ENCODE measurements at regions of chr7 and their contacts with region 1.

Region 1: DNA sequence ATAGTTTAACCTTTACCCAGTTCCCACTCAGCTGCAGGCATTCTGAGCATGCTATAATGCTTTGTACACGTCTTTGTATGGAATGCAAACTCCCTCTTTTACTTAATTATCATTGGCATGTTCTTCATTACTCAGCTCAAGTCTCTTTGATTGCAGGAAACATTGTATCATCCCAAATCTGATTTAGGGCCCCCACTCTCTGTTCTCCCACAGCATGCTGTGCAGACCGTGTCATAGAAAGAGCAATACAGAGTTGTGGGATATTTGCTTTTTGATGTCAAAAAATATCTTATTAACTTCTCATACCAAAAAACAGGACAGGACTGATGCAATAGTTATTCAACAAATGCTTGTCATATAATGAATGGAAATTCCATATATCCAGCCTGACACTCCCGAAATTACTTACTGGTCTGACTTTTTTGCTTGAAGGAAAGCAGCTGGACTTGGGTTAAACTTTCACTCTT is 1081.5 kb upstream of the C7orf33 start:
- DNase-seq: no peak
- H3K4me3 ChIP-seq: no peak overlapping the region
- CTCF ChIP-seq: no peak

Region 2: DNA sequence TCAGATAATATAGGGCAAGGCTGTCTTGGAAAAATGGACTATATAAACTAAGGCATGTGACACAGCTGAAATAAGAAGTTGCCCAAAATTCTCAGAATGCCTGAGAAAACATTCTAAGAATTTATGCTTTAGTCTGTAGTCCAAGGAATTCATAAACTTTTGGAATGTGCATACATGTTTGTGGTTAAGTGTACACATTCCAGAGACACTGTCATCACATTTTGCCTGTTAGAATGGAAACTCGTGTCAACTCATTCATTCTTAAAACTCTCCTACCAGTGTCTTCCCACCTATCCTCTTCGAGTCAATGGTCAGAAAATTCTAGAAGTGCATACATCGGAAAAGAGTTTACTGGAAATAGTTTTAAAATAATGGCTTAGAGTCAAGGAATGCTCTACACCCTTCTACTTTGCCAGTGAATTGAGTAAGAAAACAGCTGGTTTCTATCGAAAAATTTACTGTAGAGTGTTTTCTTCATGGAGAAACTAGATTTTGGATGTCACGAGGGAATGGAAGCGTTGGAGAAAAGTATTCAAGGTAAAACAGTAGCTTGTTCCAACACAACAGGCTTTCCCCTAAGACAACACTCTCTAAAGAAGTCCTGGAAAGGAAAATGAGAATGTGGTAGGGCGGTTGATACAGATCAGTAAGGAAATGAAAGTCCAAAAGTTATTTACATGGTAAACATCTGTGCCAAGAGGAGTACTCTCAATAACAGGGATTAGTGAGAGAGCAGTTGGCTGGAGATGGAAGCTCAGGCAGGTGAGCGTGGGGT is 96.1 kb before region 1 on chr7:
- in situ Hi-C with region 1: loop called (anchors 25 kb)
- DNase-seq: peak; percentile 67
- H3K4me3 ChIP-seq: no peak overlapping the region
- CTCF ChIP-seq: no peak

Region 3: GRCh38 chr7:147452816-147453215 is 56.3 kb before region 1 on chr7:
- in situ Hi-C with region 1: no loop called
- DNase-seq: no peak
- H3K4me3 ChIP-seq: no peak overlapping the region
- CTCF ChIP-seq: no peak

Region 4: GRCh38 chr7:147474862-147475261 is 34.2 kb before region 1 on chr7:
- in situ Hi-C with region 1: no loop called
- DNase-seq: no peak
- H3K4me3 ChIP-seq: no peak overlapping the region
- CTCF ChIP-seq: no peak